HepG2 (cell line): ENCODE measurements at regions of chr7 and their contacts with region 1.

Region 1: DNA sequence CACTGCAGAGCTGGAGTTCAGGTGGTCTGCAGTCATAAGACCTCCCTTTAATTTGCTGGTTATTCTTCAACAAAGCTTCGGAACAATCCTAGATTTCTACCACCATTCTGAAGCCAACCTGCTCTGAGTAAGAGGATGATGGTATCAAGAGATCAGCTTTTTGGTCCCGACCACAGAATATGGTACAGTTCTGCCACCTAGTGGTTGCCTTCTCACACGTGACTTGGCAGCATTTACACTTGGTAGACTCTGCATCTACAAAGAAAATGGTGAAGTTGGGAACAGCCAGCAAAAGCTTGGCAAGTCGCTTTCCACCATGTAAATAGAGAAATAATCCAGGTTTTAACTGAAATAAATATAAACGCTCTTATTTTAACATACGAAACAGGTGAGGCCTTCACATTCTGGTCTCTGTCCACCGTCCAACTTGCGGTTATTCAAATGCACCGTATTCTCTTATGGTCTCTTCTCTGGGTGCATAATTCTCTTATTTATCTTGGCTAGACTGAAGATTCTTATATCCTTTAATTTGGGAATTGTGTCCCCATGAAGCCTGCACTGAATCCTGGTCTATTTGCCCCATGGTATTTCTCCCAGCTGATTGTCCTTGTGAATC is 173.9 kb upstream of the GRM3 start:
- DNase-seq: peak; percentile 70
- ATAC-seq: peak; percentile 95
- H3K4me3 ChIP-seq: no peak overlapping the region
- H3K27ac ChIP-seq: no peak overlapping the region
- H3K4me1 ChIP-seq: no peaks in the 10 kb centered on the region
- H3K27me3 ChIP-seq: no peaks in the 10 kb centered on the region
- CTCF ChIP-seq: peak; percentile 87
- EP300 ChIP-seq: no peak
- POLR2A ChIP-seq: no peak
- RAD21 ChIP-seq: peak; percentile 63

Region 2: GRCh38 chr7:85068799-85069198 is 1401.0 kb before region 1 on chr7:
- CTCF ChIA-PET with region 1: no interaction called
- POLR2A ChIA-PET with region 1: no interaction called
- in situ Hi-C with region 1: loop called (anchors 25 kb)
- intact Hi-C with region 1: no loop called
- DNase-seq: no peak
- ATAC-seq: no peak
- H3K4me3 ChIP-seq: no peak overlapping the region
- H3K27ac ChIP-seq: no peak overlapping the region
- H3K4me1 ChIP-seq: no peaks in the 10 kb centered on the region
- H3K27me3 ChIP-seq: no peaks in the 10 kb centered on the region
- CTCF ChIP-seq: no peak
- EP300 ChIP-seq: no peak
- POLR2A ChIP-seq: no peak
- RAD21 ChIP-seq: no peak

Region 3: GRCh38 chr7:85890244-85890811 is 579.5 kb before region 1 on chr7:
- CTCF ChIA-PET with region 1: interaction called, 30 read pairs
- POLR2A ChIA-PET with region 1: no interaction called
- in situ Hi-C with region 1: loop called (anchors 5 kb)
- intact Hi-C with region 1: loop called (anchors 1 kb)
- DNase-seq: peak; percentile 39
- ATAC-seq: peak; percentile 62
- H3K4me3 ChIP-seq: no peak overlapping the region
- H3K27ac ChIP-seq: no peak overlapping the region
- H3K4me1 ChIP-seq: no peaks in the 10 kb centered on the region
- H3K27me3 ChIP-seq: no peaks in the 10 kb centered on the region
- CTCF ChIP-seq: peak; percentile 65
- EP300 ChIP-seq: no peak
- POLR2A ChIP-seq: no peak
- RAD21 ChIP-seq: no peak